HepG2 (cell line): ENCODE measurements at regions of chr11 and their contacts with region 1.

Region 1: GRCh38 chr11:43504316-43504950 is 145.7 kb downstream of the TTC17 start:
- DNase-seq: peak; percentile 38
- ATAC-seq: peak; percentile 96
- H3K4me3 ChIP-seq: no peak overlapping the region
- H3K27ac ChIP-seq: no peak overlapping the region
- H3K4me1 ChIP-seq: no peaks in the 10 kb centered on the region
- H3K27me3 ChIP-seq: peaks cover 2 to 7% of the 10 kb centered on the region in 2 experiments; a peak in 3 of 5 replicates
- CTCF ChIP-seq: peak; percentile 81
- EP300 ChIP-seq: no peak
- POLR2A ChIP-seq: no peak
- RAD21 ChIP-seq: peak; percentile 80

Region 2: DNA sequence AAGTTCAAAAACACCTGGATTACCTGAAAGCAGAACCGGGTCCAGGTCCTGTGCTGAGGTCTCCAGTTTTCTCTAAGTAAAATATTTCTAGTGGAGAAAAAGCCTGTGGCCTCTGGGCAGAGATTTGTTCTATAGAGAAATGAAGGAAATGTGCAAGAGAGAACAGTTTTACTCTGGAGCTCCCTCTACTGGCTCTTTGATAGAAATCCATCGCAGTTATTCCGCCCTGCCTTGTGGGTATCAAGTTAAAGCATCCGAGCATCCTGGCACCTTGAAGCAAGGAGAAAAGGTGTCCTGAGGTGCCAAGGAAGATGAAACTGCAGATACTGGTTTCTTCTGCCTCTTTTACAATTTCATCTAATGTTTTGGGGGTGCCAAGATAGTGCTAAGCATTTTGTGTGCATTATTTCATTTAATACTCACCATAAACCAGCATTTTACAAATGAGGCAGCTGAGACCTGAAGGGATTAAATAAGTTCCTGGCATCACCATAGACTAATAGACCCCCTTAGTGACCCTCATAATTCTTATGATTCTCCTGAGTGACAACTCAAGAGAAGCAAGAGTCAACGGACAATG is 63.1 kb after region 1 on chr11:
- CTCF ChIA-PET with region 1: interaction called, 27 read pairs
- POLR2A ChIA-PET with region 1: no interaction called
- in situ Hi-C with region 1: loop called (anchors 5 kb)
- intact Hi-C with region 1: loop called (anchors 1 kb)
- DNase-seq: peak; percentile 44
- ATAC-seq: peak; percentile 72
- H3K4me3 ChIP-seq: no peak overlapping the region
- H3K27ac ChIP-seq: no peak overlapping the region
- H3K4me1 ChIP-seq: no peaks in the 10 kb centered on the region
- H3K27me3 ChIP-seq: no peaks in the 10 kb centered on the region; a peak in 1 of 5 replicates
- CTCF ChIP-seq: peak; percentile 66
- EP300 ChIP-seq: no peak
- POLR2A ChIP-seq: no peak
- RAD21 ChIP-seq: no peak

Region 3: DNA sequence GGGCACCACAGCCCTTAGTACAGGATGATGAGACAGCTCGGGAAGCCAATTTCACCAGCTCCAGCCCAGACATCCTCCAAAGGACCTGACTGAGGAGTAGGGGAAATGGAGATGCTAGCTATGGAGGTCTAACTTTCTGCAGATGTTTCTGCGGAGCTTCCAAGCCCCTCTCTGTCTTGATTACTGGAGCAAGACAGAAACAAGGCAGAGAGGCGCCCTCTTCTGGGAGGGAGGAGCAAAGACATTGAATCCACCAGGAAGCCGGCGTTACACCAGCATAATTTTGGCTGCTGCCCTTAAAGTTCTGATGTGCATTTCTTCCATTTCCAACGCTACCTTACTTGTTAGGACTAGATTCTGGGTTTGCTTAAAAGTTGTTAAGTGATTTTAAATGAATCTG is 68.8 kb after region 1 on chr11:
- CTCF ChIA-PET with region 1: interaction called, 11 read pairs
- POLR2A ChIA-PET with region 1: no interaction called
- in situ Hi-C with region 1: loop called (anchors 5 kb)
- intact Hi-C with region 1: no loop called
- DNase-seq: peak; percentile 27
- ATAC-seq: peak; percentile 70
- H3K4me3 ChIP-seq: no peak overlapping the region
- H3K27ac ChIP-seq: no peak overlapping the region
- H3K4me1 ChIP-seq: no peaks in the 10 kb centered on the region
- H3K27me3 ChIP-seq: peaks cover 7 to 52% of the 10 kb centered on the region in 2 experiments; a peak in 4 of 5 replicates
- CTCF ChIP-seq: peak; percentile 72
- EP300 ChIP-seq: no peak
- POLR2A ChIP-seq: no peak
- RAD21 ChIP-seq: 0 out of 2 replicates have a peak, but pooled peaks have one; percentile 26

Region 4: DNA sequence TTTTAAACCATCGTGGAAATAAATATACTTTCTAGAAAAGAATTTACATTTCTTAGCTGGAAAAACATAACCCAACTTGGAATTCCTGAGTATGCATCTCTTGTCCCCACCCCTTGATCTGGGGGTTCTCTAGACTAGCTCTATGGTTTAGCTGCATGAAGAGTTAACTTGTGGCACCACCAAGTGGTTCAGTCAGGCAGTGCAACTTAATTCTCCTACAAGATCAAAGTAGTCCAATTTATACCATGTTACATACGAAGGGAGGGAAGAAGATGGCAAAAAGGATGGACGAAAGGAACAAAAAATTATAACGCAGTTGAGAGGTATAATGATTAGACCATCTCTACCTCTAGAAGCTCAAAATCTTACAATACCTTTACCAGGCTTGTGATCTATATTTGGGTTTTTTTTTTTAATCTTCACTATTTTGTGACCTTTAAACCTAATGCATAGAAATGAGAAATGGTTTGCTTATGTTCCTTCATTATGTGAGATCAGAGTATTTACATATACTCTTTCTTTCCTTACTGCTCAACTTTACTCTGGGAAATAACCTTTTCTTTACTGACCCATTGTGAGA is 347.7 kb after region 1 on chr11:
- CTCF ChIA-PET with region 1: no interaction called
- POLR2A ChIA-PET with region 1: no interaction called
- in situ Hi-C with region 1: no loop called
- intact Hi-C with region 1: loop called (anchors 5 kb)
- DNase-seq: peak; percentile 48
- ATAC-seq: peak; percentile 89
- H3K4me3 ChIP-seq: no peak overlapping the region
- H3K27ac ChIP-seq: no peak overlapping the region
- H3K4me1 ChIP-seq: no peaks in the 10 kb centered on the region
- H3K27me3 ChIP-seq: no peaks in the 10 kb centered on the region
- CTCF ChIP-seq: peak; percentile 69
- EP300 ChIP-seq: no peak
- POLR2A ChIP-seq: no peak
- RAD21 ChIP-seq: no peak